ENCODE measurements at regions of chr13 and their contacts with region 1.

Region 1: DNA sequence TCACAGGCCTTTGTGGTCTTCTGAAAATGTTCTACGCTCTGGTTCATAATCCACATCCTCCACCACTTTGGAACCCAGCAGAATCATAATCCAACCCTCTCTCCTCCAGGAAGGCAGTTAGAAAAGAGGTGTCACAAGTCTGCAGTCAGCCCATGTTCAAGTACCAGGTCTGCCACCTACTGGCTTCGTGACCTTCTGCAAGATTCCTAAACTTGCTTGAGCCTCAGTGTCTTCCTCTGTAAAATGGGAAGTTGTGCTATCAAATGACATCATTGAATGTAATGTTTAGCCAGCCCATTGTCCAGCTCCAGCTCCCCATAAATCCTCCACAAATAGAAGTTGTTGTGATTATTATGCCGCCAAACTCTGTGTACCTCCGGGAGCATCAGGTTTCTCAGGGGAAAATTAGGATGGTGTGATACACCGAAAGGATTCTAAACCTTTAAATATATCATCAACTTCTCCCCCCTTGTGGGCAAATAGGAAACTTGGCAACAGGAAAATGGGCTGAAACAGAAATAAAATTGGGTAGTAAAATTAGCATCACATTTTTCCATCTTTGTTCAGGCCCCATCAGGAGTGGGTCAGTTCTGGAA is 109.7 kb downstream of the NUFIP1 start:
- DNase-seq: no peak
- H3K4me3 ChIP-seq: no peak overlapping the region
- H3K27ac ChIP-seq: no peak overlapping the region
- H3K4me1 ChIP-seq: peaks cover 4% of the 10 kb centered on the region
- H3K27me3 ChIP-seq: no peaks in the 10 kb centered on the region
- CTCF ChIP-seq: peak; percentile 58

Region 2: GRCh38 chr13:44313674-44314073 is 565.9 kb before region 1 on chr13:
- intact Hi-C with region 1: no loop called
- DNase-seq: no peak
- H3K4me3 ChIP-seq: no peak overlapping the region
- H3K27ac ChIP-seq: no peak overlapping the region
- H3K4me1 ChIP-seq: peaks cover 25% of the 10 kb centered on the region
- H3K27me3 ChIP-seq: no peaks in the 10 kb centered on the region
- CTCF ChIP-seq: no peak

Region 3: DNA sequence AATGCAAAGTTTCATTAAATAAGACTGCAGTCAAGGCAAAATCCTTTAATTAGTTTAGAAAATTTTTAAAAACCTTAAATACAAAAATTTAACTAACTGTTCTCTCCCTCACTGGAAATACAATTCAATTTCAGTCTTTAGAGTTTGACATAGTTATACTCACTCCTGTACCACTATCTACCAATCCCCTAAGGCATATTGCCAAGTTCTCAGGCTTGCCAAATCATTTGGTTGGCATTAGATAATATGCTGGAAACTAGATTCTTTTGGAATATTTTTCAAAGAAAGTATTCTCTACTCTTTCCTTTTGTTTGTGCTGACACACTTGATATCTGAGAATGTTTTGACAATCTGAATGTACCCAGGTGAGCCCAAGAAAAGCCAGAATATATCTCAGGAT is 380.6 kb before region 1 on chr13:
- intact Hi-C with region 1: loop called (anchors 10 kb)
- DNase-seq: no peak
- H3K4me3 ChIP-seq: no peak overlapping the region
- H3K27ac ChIP-seq: no peak overlapping the region
- H3K4me1 ChIP-seq: peaks cover 30% of the 10 kb centered on the region
- H3K27me3 ChIP-seq: no peaks in the 10 kb centered on the region
- CTCF ChIP-seq: no peak